Head of caudate nucleus (tissue), 42 donors: ENCODE measurements at regions of chr22 and their contacts with region 1.

Region 1: GRCh38 chr22:35257321-35258190 is at the start of gene HMGXB4:
- DNase-seq: peak; percentile 74 to 97 (median 92)

Region 2: DNA sequence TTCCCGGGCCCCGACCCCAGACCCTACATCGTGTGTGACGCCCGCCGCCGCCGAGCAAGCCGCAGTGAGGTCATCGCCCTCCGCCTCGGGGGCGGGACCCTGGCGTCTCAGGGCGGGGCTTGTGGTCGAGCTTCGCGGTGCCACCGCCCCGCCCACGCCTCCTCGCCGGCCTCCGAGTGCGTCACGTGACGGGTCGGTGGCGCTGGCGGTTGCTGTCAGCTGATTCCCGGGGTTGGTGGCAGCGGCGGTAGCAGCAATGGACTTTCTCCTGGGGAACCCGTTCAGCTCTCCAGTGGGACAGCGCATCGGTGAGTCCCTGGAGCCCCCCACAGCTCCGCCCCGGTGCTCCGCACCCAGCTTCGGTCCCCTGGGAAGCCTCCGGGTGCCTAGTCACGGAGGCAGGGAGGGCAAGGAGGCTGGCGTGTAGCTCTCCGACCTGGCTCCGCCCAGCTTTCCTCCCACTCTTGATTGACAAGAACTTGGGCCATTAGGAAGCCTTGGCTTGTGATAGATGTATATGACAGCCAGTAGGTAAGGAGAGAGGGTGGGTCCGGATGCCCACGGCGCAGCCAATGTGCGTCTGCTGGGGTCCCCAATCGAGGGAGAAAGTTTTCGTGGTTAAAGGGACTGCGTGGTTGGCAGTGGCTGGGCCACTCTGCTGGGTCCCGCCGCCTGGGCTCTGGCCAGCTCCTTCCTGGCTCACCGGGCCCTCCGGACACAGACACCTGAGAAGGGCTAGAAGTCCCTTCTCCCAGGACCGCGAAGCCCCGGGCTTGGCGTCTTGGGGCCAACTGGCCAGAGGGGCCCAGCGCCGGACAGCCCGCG is 42.3 kb after region 1 on chr22 and contains the start of gene TOM1:
- intact Hi-C with region 1: loop called (anchors 5 kb)
- DNase-seq: peak; percentile 93 to 99 (median 97)